ENCODE measurements at regions of chr13 and their contacts with region 1.

Region 1: GRCh38 chr13:97030705-97031452 is 36.6 kb upstream of the OXGR1 start:
- DNase-seq: peak in 1 of 2 experiments; percentile 32
- H3K4me3 ChIP-seq: no peak overlapping the region
- H3K4me3 Mint-ChIP-seq: no peak overlapping the region
- H3K27ac Mint-ChIP-seq: no peak overlapping the region
- H3K4me1 ChIP-seq: peaks cover 13% of the 10 kb centered on the region
- H3K4me1 Mint-ChIP-seq: peaks cover 26% of the 10 kb centered on the region
- H3K27me3 ChIP-seq: no peaks in the 10 kb centered on the region
- H3K27me3 Mint-ChIP-seq: no peaks in the 10 kb centered on the region
- CTCF ChIP-seq: peak; percentile 31 to 56

Region 2: DNA sequence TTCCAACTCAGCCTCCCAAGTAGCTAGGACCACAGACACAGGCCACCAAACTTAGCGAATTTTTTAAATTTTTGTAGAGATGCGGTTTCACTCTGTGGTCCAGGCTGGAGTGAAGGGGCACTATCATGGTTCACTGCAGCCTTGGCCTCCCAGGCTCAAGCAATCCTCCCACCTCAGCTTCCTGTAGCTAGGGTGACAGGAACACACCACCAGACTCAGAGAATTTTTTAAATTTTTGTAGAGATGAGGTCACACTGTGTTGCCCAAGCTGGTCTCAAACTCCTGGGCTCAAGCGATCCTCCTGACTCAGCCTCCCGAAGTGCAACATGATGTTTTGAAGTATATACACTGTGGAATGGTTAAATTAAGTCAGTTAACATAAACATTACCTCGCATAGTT is 300.2 kb before region 1 on chr13:
- CTCF ChIA-PET with region 1: no interaction called
- POLR2A ChIA-PET with region 1: no interaction called
- intact Hi-C with region 1: no loop called
- DNase-seq: no peak
- H3K4me3 ChIP-seq: no peak overlapping the region
- H3K4me3 Mint-ChIP-seq: no peak overlapping the region
- H3K27ac Mint-ChIP-seq: no peak overlapping the region
- H3K4me1 ChIP-seq: no peaks in the 10 kb centered on the region
- H3K4me1 Mint-ChIP-seq: no peaks in the 10 kb centered on the region
- H3K27me3 ChIP-seq: no peaks in the 10 kb centered on the region; the same call in 1 of the 2 replicates
- H3K27me3 Mint-ChIP-seq: peaks cover 14% of the 10 kb centered on the region
- CTCF ChIP-seq: no peak

Region 3: GRCh38 chr13:96925916-96926628 is 104.8 kb before region 1 on chr13:
- CTCF ChIA-PET with region 1: no interaction called
- POLR2A ChIA-PET with region 1: no interaction called
- intact Hi-C with region 1: loop called (anchors 1 kb)
- DNase-seq: peak; percentile 40 to 74
- H3K4me3 ChIP-seq: no peak overlapping the region
- H3K4me3 Mint-ChIP-seq: no peak overlapping the region
- H3K27ac Mint-ChIP-seq: no peak overlapping the region
- H3K4me1 ChIP-seq: peaks cover 20% of the 10 kb centered on the region
- H3K4me1 Mint-ChIP-seq: peaks cover 12% of the 10 kb centered on the region
- H3K27me3 ChIP-seq: no peaks in the 10 kb centered on the region
- H3K27me3 Mint-ChIP-seq: peaks cover 9% of the 10 kb centered on the region
- CTCF ChIP-seq: no peak

Region 4: DNA sequence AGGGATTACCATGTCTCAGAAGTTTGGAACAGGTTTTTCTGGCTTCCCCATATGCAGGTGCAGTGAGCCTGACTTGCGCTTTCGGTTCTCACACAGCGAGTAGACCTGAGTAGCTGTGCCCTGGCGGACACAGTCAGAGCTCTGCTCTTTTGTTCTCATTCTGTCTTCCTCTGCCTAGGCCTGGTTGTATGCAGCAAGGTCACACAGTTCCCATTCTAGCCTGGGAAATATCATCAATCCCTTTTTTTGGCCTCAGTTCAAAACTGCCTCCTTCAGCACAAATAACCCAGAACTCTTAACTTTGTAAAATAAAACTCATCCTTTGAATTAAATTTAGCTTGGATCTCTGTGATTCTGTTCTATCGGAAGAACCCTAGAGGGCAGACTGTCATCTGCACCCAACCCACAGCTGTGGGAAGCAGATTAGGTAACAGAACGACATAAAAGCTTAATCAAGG is 46.8 kb before region 1 on chr13:
- CTCF ChIA-PET with region 1: no interaction called
- POLR2A ChIA-PET with region 1: no interaction called
- intact Hi-C with region 1: loop called (anchors 2 kb)
- DNase-seq: peak; percentile 75 to 77
- H3K4me3 ChIP-seq: no peak overlapping the region
- H3K4me3 Mint-ChIP-seq: peak overlapping the region; percentile 62
- H3K27ac Mint-ChIP-seq: peak overlapping the region; percentile 16
- H3K4me1 ChIP-seq: no peaks in the 10 kb centered on the region
- H3K4me1 Mint-ChIP-seq: peaks cover 14% of the 10 kb centered on the region
- H3K27me3 ChIP-seq: no peaks in the 10 kb centered on the region; the same call in 1 of the 2 replicates
- H3K27me3 Mint-ChIP-seq: peaks cover 10% of the 10 kb centered on the region
- CTCF ChIP-seq: peak; percentile 32 to 38

Region 5: DNA sequence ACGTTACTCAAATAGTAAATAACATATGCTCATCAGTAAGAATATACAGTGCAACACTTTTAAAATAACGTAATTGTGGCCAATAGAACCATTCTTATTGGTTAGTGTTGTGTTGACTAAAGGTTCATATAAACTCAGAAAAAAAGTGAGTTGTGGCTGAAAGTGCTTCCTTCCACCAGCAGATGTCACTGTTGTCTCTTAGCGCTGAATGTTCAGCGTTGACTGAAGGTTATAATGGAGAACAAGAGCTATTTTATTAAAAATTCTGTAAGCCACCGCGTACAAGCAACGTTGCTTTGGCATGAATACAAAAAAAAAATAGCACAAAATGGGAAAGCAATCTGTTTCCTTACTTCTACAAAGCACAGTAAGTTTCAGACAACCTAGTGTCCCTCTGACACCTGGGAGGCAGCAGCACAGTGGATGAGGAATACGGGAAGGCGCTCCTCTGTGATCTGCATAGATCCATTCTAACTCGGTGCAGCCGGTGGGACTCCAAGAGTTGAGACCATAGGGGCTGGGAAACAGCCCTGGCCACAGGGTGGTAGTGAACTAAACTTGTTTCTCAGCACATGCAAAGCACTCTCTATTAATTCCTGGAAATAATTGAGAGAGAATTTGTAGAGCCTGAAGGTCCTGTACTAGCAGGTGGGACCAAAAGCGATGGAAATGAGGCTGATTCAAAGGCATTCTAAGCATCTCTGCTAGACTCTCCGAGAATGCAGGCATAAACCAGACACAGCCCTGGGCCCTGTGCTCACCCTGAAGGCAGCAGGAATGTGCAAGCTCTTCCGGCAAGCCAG is 12.6 kb before region 1 on chr13:
- CTCF ChIA-PET with region 1: interaction called, 5 read pairs
- POLR2A ChIA-PET with region 1: no interaction called
- intact Hi-C with region 1: loop called (anchors 1 kb)
- DNase-seq: peak; percentile 52 to 59
- H3K4me3 ChIP-seq: no peak overlapping the region
- H3K4me3 Mint-ChIP-seq: peak overlapping the region; percentile 58
- H3K27ac Mint-ChIP-seq: no peak overlapping the region
- H3K4me1 ChIP-seq: peaks cover 21% of the 10 kb centered on the region
- H3K4me1 Mint-ChIP-seq: peaks cover 11% of the 10 kb centered on the region
- H3K27me3 ChIP-seq: no peaks in the 10 kb centered on the region
- H3K27me3 Mint-ChIP-seq: peaks cover 7% of the 10 kb centered on the region
- CTCF ChIP-seq: peak; percentile 79 to 91

Region 6: GRCh38 chr13:97212601-97213040 is 181.7 kb after region 1 on chr13:
- CTCF ChIA-PET with region 1: no interaction called
- POLR2A ChIA-PET with region 1: no interaction called
- intact Hi-C with region 1: loop called (anchors 1 kb)
- DNase-seq: peak in 1 of 2 experiments; percentile 65
- H3K4me3 ChIP-seq: no peak overlapping the region
- H3K4me3 Mint-ChIP-seq: no peak overlapping the region
- H3K27ac Mint-ChIP-seq: no peak overlapping the region
- H3K4me1 ChIP-seq: peaks cover 24% of the 10 kb centered on the region
- H3K4me1 Mint-ChIP-seq: peaks cover 22% of the 10 kb centered on the region
- H3K27me3 ChIP-seq: no peaks in the 10 kb centered on the region
- H3K27me3 Mint-ChIP-seq: no peaks in the 10 kb centered on the region
- CTCF ChIP-seq: peak; percentile 59 to 69

Region 7: GRCh38 chr13:97359181-97360057 is 328.5 kb after region 1 on chr13:
- CTCF ChIA-PET with region 1: no interaction called
- POLR2A ChIA-PET with region 1: no interaction called
- intact Hi-C with region 1: loop called (anchors 1 kb)
- DNase-seq: peak; percentile 54 to 80
- H3K4me3 ChIP-seq: no peak overlapping the region
- H3K4me3 Mint-ChIP-seq: no peak overlapping the region
- H3K27ac Mint-ChIP-seq: no peak overlapping the region
- H3K4me1 ChIP-seq: peaks cover 6% of the 10 kb centered on the region; the same call in 1 of the 2 replicates
- H3K4me1 Mint-ChIP-seq: peaks cover 21% of the 10 kb centered on the region
- H3K27me3 ChIP-seq: no peaks in the 10 kb centered on the region
- H3K27me3 Mint-ChIP-seq: no peaks in the 10 kb centered on the region
- CTCF ChIP-seq: peak; percentile 83 to 85

Region 8: GRCh38 chr13:97574926-97575325 is 544.0 kb after region 1 on chr13:
- CTCF ChIA-PET with region 1: no interaction called
- POLR2A ChIA-PET with region 1: no interaction called
- intact Hi-C with region 1: loop called (anchors 10 kb)
- DNase-seq: peak; percentile 54 to 62
- H3K4me3 ChIP-seq: no peak overlapping the region
- H3K4me3 Mint-ChIP-seq: no peak overlapping the region
- H3K27ac Mint-ChIP-seq: no peak overlapping the region
- H3K4me1 ChIP-seq: 0 out of 2 replicates have a peak, but pooled peaks cover 3% of the 10 kb centered on the region
- H3K4me1 Mint-ChIP-seq: peaks cover 3% of the 10 kb centered on the region
- H3K27me3 ChIP-seq: no peaks in the 10 kb centered on the region
- H3K27me3 Mint-ChIP-seq: no peaks in the 10 kb centered on the region
- CTCF ChIP-seq: peak; percentile 55

Measured in Caco-2 (cell line).